Endothelial cell of umbilical vein (primary cell): ENCODE measurements at regions of chr10 and their contacts with region 1.

Region 1: GRCh38 chr10:88565072-88565471 is 18.0 kb downstream of the RNLS start:
- DNase-seq: peak; percentile 42
- H3K4me3 ChIP-seq: no peak overlapping the region
- H3K27ac ChIP-seq: no peak overlapping the region
- H3K4me1 ChIP-seq: no peaks in the 10 kb centered on the region
- H3K27me3 ChIP-seq: no peaks in the 10 kb centered on the region
- CTCF ChIP-seq: peak in 1 of 2 donors; percentile 11
- POLR2A ChIP-seq: no peak

Region 2: DNA sequence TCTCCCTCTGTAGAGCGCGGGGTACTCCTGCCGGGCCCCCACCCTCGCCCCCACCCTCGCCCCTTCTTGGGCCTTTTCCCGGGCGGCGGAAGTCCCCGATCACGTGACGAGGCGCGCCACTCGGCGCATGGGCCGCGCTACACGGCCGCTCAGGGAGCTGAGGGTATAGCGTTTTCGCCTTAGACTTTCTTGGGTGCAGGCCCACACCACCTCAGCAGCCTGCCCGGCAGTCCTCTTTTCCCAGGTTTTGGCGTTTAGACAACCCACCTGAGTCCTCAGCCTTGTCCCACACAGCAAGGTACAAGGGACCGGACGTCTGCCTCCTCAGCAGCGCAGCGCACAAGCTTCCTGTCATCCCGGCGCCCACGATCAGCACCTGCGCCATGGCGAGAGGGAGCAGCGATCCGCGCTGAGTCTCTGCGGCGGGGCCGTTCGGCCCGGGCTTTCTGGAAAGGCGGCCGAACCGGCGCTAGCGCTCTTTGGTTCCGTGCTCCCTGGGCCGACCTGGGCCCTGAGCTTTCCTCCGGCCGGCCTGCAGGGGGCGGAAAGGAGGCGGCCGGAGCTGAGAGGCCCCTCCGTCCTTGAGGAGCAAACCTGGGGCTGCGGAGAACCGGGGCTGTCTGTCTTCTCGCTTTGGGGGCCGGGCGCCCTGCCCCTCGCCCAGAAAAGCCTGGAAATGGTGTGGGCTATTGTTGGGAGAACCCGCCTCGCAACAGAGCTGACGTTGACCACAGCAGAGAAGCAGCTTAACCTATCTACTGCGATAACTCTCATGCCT is 17.9 kb after region 1 on chr10 and contains the start of gene RNLS:
- CTCF ChIA-PET with region 1: interaction called, 43 read pairs
- POLR2A ChIA-PET with region 1: no interaction called
- dilution Hi-C with region 1: no loop called
- intact Hi-C with region 1: no loop called
- DNase-seq: peak; percentile 73
- H3K4me3 ChIP-seq: peak within 1 kb of the TSS; percentile 42 to 62 (median 47)
- H3K27ac ChIP-seq: peak within 1 kb of the TSS; percentile 0
- H3K4me1 ChIP-seq: peaks cover 4% of the 10 kb centered on the region
- H3K27me3 ChIP-seq: no peaks in the 10 kb centered on the region
- CTCF ChIP-seq: peak; percentile 81 to 93
- POLR2A ChIP-seq: no peak
- total RNA-seq, gene RNLS: 2.5 and 3.6 TPM in 2 replicates

Region 3: DNA sequence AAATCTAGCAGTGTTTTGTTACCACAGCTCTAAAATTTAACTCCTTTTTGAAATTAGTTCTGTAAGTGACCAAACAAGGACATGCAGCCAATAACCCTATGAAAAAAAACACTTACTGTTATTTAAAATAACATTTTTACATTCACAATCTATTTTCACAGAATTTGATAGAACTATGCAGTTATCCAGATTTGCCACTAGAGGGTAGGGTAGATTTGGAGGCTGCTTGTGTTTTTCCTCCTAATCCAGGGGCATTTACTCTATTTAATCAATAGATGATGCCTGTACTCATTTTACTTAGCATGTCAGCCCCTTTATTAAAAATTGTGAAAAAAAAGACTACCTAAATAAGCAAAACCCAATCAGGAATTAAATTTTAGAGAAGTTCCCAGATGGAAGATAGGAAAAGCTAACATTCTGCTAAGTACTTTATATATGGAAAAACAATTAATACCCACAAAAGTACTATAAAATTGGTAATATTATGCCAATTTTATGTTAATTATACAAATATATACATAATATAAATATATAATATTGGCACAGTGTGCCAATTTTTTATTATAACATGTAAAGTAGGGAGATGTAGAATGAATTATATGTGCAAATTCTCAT is 122.9 kb after region 1 on chr10:
- CTCF ChIA-PET with region 1: interaction called, 30 read pairs
- POLR2A ChIA-PET with region 1: no interaction called
- dilution Hi-C with region 1: no loop called
- intact Hi-C with region 1: loop called (anchors 1 kb)
- DNase-seq: peak; percentile 31
- H3K4me3 ChIP-seq: no peak overlapping the region
- H3K27ac ChIP-seq: no peak overlapping the region
- H3K4me1 ChIP-seq: no peaks in the 10 kb centered on the region
- H3K27me3 ChIP-seq: no peaks in the 10 kb centered on the region
- CTCF ChIP-seq: peak; percentile 45 to 53
- POLR2A ChIP-seq: no peak

Region 4: GRCh38 chr10:88791924-88792323 is 226.9 kb after region 1 on chr10:
- CTCF ChIA-PET with region 1: interaction called, 48 read pairs
- POLR2A ChIA-PET with region 1: no interaction called
- dilution Hi-C with region 1: no loop called
- intact Hi-C with region 1: loop called (anchors 1 kb)
- DNase-seq: peak; percentile 33
- H3K4me3 ChIP-seq: no peak overlapping the region
- H3K27ac ChIP-seq: no peak overlapping the region
- H3K4me1 ChIP-seq: no peaks in the 10 kb centered on the region
- H3K27me3 ChIP-seq: no peaks in the 10 kb centered on the region
- CTCF ChIP-seq: peak; percentile 49 to 67
- POLR2A ChIP-seq: no peak

Region 5: DNA sequence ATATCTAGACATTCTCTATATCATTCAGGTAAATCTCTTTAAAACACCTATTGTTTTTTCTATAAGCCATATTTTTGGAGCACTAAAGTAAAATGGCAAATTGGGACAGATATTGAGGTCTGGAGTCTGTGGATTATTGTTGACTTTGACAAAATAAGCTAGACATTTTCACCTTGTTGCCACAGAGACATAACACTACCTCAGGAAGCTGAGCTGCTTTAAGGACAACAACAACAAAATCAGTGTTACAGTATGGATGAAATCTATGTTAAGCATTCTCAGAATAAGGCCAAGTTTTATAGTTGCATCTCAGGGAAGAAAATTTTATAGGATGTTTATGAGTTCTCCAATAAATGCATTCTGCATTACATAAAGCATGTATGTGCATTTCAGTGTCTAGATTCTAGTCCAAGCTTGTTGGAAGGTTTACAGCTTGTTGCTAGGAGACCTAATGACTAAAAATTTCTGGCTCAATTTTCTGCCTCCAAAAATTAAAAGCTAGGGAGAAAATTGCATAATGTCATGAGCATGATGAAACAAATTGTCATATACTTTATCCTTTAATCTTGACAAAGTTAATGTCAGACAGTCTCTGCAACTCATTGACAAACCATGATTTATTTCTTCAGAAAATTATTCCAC is 255.8 kb after region 1 on chr10:
- CTCF ChIA-PET with region 1: interaction called, 20 read pairs
- POLR2A ChIA-PET with region 1: no interaction called
- dilution Hi-C with region 1: no loop called
- intact Hi-C with region 1: no loop called
- DNase-seq: no peak
- H3K4me3 ChIP-seq: no peak overlapping the region
- H3K27ac ChIP-seq: no peak overlapping the region
- H3K4me1 ChIP-seq: no peaks in the 10 kb centered on the region
- H3K27me3 ChIP-seq: peaks cover 0 to 5% of the 10 kb centered on the region in 2 experiments
- CTCF ChIP-seq: no peak
- POLR2A ChIP-seq: no peak

Region 6: DNA sequence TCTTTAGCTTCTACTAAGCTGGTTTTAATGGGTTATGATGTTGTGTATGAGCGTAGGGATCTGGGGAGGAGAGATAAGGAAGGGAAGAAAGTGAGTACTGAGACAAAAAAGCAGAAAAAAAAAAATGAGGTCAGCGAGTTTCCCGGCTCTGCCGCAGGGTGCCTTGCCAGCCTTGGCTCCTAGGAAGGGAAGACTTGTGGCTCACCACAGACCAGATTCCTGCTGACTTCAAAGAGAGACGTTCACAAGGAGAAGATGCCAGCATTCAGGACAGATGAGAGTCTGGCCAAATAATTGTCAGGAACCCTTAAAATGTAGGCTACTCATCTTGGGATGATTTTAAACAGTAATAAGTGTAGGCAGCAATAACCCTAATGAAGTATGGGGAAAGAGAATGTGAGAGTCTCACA is 414.1 kb after region 1 on chr10:
- CTCF ChIA-PET with region 1: interaction called, 5 read pairs
- POLR2A ChIA-PET with region 1: no interaction called
- dilution Hi-C with region 1: no loop called
- intact Hi-C with region 1: loop called (anchors 5 kb)
- DNase-seq: no peak
- H3K4me3 ChIP-seq: no peak overlapping the region
- H3K27ac ChIP-seq: no peak overlapping the region
- H3K4me1 ChIP-seq: peaks cover 21% of the 10 kb centered on the region
- H3K27me3 ChIP-seq: no peaks in the 10 kb centered on the region
- CTCF ChIP-seq: no peak
- POLR2A ChIP-seq: no peak